ENCODE measurements at regions of chr2 and their contacts with region 1.

Region 1: DNA sequence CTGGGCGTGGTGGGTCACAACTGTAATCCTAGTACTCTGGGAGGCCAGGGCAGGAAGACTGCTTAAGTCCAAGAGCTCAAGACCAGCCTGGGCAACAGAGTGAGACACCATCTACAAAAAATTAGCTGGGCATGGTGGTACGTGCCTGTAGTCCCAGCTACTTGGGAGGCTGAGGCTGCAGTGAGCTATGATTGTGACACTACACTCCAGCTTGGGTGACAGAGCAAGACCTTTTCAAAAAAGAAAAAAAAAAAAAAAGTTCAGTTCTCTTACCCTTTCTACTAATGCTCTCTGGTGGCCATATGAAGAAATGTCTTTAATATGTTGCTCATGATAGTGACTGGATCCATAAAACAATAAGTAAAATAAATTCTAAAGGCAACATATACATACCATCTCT is 14.9 kb downstream of the TYW5 start:
- DNase-seq: peak in 2 of 5 donors; percentile 1 to 25
- H3K4me3 ChIP-seq: no peak overlapping the region
- H3K4me3 Mint-ChIP-seq: no peak overlapping the region
- H3K27ac ChIP-seq: no peak overlapping the region
- H3K27ac Mint-ChIP-seq: no peak overlapping the region
- H3K4me1 ChIP-seq: no peaks in the 10 kb centered on the region
- H3K4me1 Mint-ChIP-seq: peaks cover 4 to 6% (median 4%) of the 10 kb centered on the region in 4 donors
- H3K27me3 ChIP-seq: no peaks in the 10 kb centered on the region
- H3K27me3 Mint-ChIP-seq: no peaks in the 10 kb centered on the region

Region 2: DNA sequence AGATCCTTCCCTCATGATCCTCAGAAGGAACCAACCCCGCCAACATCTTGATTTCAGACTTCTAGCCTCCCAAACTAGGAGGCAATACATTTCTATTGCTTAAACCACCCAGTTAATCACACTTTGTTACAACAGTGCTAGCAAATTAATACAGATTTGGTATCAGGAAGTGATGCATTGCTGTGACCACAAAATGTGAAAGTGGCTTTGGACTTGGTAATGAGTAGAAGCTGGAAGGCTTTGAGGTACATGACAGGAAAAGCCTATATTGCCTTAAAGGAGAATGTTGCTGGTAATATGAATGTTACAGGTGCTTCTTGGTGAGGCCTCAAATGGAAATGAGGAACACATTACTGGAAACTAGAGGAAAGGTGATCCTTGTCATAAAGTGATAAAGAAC is 742.9 kb before region 1 on chr2:
- CTCF ChIA-PET with region 1: no interaction called
- POLR2A ChIA-PET with region 1: no interaction called
- intact Hi-C with region 1: no loop called
- DNase-seq: no peak
- H3K4me3 ChIP-seq: no peak overlapping the region
- H3K4me3 Mint-ChIP-seq: no peak overlapping the region
- H3K27ac ChIP-seq: no peak overlapping the region
- H3K27ac Mint-ChIP-seq: no peak overlapping the region
- H3K4me1 ChIP-seq: no peaks in the 10 kb centered on the region
- H3K4me1 Mint-ChIP-seq: peaks cover 0 to 2% (median 0%) of the 10 kb centered on the region in 4 donors
- H3K27me3 ChIP-seq: no peaks in the 10 kb centered on the region
- H3K27me3 Mint-ChIP-seq: no peaks in the 10 kb centered on the region

Region 3: DNA sequence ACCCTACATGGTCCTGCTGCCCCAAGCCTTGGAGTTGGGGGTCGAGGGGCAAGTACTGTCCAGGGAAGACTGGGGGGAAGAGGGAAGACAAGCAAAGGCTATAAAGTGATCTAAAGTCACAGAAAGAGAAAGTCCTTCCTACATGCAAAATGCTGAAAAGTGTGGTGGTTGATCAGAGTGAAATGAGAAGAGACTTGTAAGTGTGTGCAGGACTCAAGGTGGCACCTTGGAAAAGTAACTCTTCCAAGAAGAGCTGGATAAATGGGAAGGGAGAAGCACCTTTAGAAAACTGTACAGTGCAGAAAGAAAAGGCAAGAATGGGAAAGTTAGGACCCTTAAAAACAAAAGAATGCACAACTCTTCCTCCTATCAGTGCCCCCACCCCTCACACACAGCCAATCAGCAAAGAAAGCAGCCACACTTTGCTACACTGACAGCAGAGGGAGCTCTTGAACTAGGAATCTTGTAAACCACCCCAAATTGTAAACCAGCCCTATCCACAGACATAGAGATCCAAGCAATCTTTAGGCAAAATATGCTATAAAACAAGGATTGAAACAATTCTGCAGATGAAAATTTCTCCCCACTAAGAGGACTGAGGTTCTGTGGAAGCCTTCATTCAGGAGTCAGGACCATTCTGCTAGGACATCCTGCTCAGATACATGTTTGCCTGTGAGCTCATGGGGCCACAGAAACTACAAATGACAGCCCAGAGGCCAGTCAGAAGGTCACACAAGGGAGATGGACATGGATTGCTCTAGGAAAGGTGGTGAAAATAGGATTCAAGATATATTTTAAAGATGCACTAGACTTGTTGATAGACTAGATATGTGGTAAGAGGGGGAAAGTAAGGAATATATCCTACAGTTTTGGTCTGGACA is 235.8 kb before region 1 on chr2:
- CTCF ChIA-PET with region 1: no interaction called
- POLR2A ChIA-PET with region 1: no interaction called
- intact Hi-C with region 1: loop called (anchors 2 kb)
- DNase-seq: peak in 4 of 5 donors; percentile 9 to 23 (median 16)
- H3K4me3 ChIP-seq: no peak overlapping the region
- H3K4me3 Mint-ChIP-seq: no peak overlapping the region
- H3K27ac ChIP-seq: no peak overlapping the region
- H3K27ac Mint-ChIP-seq: no peak overlapping the region
- H3K4me1 ChIP-seq: no peaks in the 10 kb centered on the region
- H3K4me1 Mint-ChIP-seq: no peaks in the 10 kb centered on the region
- H3K27me3 ChIP-seq: no peaks in the 10 kb centered on the region
- H3K27me3 Mint-ChIP-seq: peaks cover 0 to 2% of the 10 kb centered on the region in 2 donors

Measured in CD4-positive, alpha-beta memory T cell (primary cell).